CD4-positive, alpha-beta memory T cell (primary cell): ENCODE measurements at regions of chr5 and their contacts with region 1.

Region 1: DNA sequence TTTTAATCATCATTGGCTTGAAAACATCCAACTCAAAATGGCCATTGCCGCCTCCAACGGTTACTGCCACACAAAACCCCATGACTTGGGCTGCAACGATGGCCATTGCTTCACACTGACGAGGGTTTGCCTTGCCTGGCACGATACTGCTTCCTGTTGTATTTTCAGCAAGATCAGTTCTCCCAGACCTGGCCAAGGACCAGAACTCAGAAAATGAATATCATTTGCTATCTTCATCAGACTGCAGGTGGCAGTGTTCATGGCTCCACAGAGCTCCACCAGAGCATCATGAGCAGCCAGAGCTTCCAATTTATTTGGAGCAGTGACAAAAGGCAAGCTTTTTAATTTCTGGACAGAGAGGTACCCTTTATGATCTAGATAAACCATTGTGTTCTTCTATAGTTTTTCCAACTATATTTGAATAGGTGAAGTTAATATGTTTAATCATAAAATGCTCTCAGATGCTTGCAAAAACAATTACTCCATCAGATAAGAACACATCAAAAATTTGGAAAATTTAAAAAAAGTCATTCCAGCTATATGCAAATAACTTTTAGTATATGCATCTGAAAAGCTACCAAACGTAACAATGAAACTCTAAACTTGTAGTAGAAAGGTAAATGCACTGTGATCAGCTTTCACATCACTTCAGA is 10.4 kb downstream of the AMACR start:
- DNase-seq: peak; percentile 28 to 36 (median 33)
- H3K4me3 ChIP-seq: no peak overlapping the region
- H3K4me3 Mint-ChIP-seq: no peak overlapping the region
- H3K27ac ChIP-seq: no peak overlapping the region
- H3K27ac Mint-ChIP-seq: peak overlapping the region in 2 of 7 donors; percentile 19 to 37
- H3K4me1 ChIP-seq: no peaks in the 10 kb centered on the region
- H3K4me1 Mint-ChIP-seq: peaks cover 3 to 7% (median 6%) of the 10 kb centered on the region in 4 donors
- H3K27me3 ChIP-seq: no peaks in the 10 kb centered on the region
- H3K27me3 Mint-ChIP-seq: no peaks in the 10 kb centered on the region

Region 2: DNA sequence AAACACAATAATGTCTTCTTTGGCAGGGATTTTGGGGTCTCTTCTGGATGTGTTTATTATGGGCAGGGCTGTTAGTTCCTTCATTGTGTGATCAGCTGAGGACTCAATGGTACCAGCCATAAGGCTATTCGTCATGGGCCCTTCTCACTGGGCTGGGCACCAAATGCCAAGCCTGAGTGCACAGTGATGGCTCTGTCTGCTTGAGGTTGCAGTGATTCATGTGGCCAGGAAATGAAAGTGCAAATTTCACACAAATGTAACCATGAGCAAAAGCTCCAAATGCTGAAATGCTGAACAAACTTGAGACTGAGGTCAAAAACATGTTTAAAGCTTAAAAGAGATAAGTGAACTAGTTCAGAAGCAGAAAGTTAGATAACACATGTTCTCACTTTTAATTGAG is 365.7 kb before region 1 on chr5:
- CTCF ChIA-PET with region 1: no interaction called
- POLR2A ChIA-PET with region 1: no interaction called
- intact Hi-C with region 1: no loop called
- DNase-seq: no peak
- H3K4me3 ChIP-seq: no peak overlapping the region
- H3K4me3 Mint-ChIP-seq: no peak overlapping the region
- H3K27ac ChIP-seq: no peak overlapping the region
- H3K27ac Mint-ChIP-seq: no peak overlapping the region
- H3K4me1 ChIP-seq: no peaks in the 10 kb centered on the region
- H3K4me1 Mint-ChIP-seq: no peaks in the 10 kb centered on the region
- H3K27me3 ChIP-seq: no peaks in the 10 kb centered on the region
- H3K27me3 Mint-ChIP-seq: peaks cover 0 to 4% of the 10 kb centered on the region in 2 donors

Region 3: DNA sequence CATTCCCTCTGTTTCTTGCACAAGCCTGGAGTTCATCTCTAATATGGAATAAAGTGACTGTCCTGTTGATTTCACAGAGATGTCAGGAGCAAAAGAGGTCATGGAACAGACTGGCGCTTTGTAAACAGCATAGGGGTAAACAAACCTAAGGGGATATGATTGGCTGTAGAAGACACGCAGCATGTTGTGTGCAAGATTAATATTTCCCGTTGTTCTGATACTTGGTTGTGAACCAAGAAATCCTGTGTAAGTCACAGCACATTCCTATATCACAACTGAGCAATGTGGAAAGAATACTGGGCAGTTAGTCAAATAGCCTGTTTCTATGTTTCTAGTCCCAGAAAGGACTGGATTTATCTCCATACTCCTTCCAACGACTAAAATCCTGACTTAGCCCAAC is 108.9 kb before region 1 on chr5:
- CTCF ChIA-PET with region 1: no interaction called
- POLR2A ChIA-PET with region 1: no interaction called
- intact Hi-C with region 1: no loop called
- DNase-seq: no peak
- H3K4me3 ChIP-seq: no peak overlapping the region
- H3K4me3 Mint-ChIP-seq: no peak overlapping the region
- H3K27ac ChIP-seq: no peak overlapping the region
- H3K27ac Mint-ChIP-seq: no peak overlapping the region
- H3K4me1 ChIP-seq: no peaks in the 10 kb centered on the region
- H3K4me1 Mint-ChIP-seq: peaks cover 0 to 11% (median 3%) of the 10 kb centered on the region in 4 donors
- H3K27me3 ChIP-seq: peaks cover 10% of the 10 kb centered on the region
- H3K27me3 Mint-ChIP-seq: peaks cover 21 to 27% of the 10 kb centered on the region in 2 donors

Region 4: DNA sequence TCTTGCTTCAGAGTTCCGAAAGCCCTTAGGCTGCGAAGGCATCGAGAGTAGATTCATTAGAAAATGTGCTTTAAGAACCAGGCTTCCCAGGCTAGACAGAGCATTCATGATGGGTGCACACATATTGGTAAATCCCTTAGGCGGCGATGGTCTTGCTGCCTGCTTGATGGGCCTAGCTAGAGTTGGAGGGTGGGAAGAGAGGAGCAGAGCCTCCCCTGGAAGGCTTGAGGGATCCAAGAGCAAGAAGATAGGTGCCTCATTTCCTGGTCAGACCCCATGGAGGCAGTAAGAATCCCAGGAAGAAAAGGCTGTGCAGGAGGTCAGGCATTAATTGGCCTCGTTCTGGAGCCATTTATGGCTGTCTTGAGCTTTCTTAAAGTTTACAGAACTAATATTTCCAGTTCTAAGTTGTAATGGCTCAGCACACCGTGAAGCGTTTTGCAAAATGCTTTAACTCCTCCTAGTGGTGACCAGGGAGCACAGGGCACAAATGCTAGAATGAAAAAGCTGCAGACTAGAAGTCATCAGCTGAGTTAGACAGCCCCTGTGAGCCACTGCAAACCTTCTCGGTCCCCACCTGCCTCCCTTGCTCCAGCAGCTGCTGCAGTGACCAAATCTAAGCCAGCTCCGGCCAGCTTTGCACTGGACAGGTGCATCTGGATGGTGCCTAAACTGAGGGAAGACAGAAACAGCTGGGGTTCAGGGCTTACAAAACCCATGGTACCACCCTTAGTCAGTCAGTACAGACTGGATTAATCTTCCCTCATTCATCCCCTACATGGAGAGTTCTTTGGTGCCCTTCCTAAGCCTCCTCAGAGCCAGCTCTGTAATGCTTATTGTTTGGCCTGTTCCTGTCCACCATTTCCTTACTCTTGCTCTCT is 27.6 kb before region 1 on chr5:
- CTCF ChIA-PET with region 1: interaction called, 25 read pairs
- POLR2A ChIA-PET with region 1: no interaction called
- intact Hi-C with region 1: no loop called
- DNase-seq: peak in 4 of 5 donors; percentile 8 to 20 (median 12)
- H3K4me3 ChIP-seq: no peak overlapping the region
- H3K4me3 Mint-ChIP-seq: no peak overlapping the region
- H3K27ac ChIP-seq: no peak overlapping the region
- H3K27ac Mint-ChIP-seq: peak overlapping the region in 1 of 7 donors; percentile 35
- H3K4me1 ChIP-seq: no peaks in the 10 kb centered on the region
- H3K4me1 Mint-ChIP-seq: peaks cover 2 to 12% (median 7%) of the 10 kb centered on the region in 4 donors
- H3K27me3 ChIP-seq: no peaks in the 10 kb centered on the region
- H3K27me3 Mint-ChIP-seq: no peaks in the 10 kb centered on the region

Region 5: DNA sequence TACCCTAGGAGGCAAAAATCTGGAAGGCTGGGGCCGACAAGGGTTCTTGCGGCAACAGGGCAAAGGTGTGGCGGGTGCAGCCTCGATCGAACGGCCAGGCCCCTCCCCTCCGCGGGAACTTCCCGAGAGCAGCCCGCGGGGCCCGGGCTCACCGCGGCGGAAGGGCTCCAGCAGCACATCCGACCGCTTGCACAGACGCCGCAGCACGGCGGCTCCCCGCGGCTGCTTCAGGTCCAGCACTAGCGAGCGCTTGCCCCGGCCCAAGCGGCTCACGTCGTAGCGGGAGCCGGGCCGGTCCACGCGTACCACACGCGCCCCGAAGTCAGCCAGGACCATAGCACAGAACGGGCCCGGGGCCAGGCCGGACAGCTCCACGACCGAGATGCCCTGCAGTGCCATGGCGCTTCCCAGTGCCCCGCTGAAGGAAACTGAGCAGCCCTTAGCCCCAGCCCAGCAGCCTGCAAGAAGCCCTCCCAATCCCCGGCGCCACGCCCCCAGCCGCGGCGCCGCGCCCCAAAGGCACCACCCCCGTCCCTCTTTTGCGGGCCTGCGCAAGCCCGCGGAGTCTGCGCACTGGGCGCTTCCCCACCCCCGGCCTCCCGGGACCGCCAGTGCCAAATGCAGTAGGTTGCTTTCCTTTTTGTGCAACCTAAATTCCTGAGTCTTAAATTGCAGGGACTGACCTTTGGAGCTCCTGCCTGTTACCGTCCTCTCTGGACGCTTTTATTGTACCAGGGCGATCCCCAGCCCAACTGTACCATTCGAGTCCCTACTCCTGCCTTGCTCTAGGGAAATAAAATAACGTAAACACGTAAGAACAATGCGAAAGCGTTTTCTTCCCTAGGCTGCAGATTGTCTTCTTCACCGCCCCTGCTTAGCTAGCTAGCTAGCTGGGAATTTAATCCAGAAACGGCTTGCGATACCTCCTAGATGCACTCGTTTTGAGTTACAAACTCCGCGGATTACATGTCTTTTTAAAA is 10.5 kb after region 1 on chr5 and contains the start of gene AMACR:
- CTCF ChIA-PET with region 1: interaction called, 31 read pairs
- POLR2A ChIA-PET with region 1: interaction called, 10 read pairs
- intact Hi-C with region 1: no loop called
- DNase-seq: peak; percentile 75 to 87 (median 86)
- H3K4me3 ChIP-seq: peak within 1 kb of the TSS; percentile 96 to 100
- H3K4me3 Mint-ChIP-seq: peak within 1 kb of the TSS; percentile 93 to 97 (median 96)
- H3K27ac ChIP-seq: peak within 1 kb of the TSS; percentile 76
- H3K27ac Mint-ChIP-seq: peak within 1 kb of the TSS; percentile 84 to 96 (median 94)
- H3K4me1 ChIP-seq: peaks cover 22% of the 10 kb centered on the region
- H3K4me1 Mint-ChIP-seq: peaks cover 11 to 27% (median 19%) of the 10 kb centered on the region in 4 donors
- H3K27me3 ChIP-seq: no peaks in the 10 kb centered on the region
- H3K27me3 Mint-ChIP-seq: no peaks in the 10 kb centered on the region
- total RNA-seq, gene AMACR: 5.2 to 7.3 TPM

Region 6: GRCh38 chr5:34459908-34460307 is 462.5 kb after region 1 on chr5:
- CTCF ChIA-PET with region 1: interaction called, 11 read pairs
- POLR2A ChIA-PET with region 1: no interaction called
- intact Hi-C with region 1: loop called (anchors 1 kb)
- DNase-seq: no peak
- H3K4me3 ChIP-seq: no peak overlapping the region
- H3K4me3 Mint-ChIP-seq: no peak overlapping the region
- H3K27ac ChIP-seq: no peak overlapping the region
- H3K27ac Mint-ChIP-seq: no peak overlapping the region
- H3K4me1 ChIP-seq: no peaks in the 10 kb centered on the region
- H3K4me1 Mint-ChIP-seq: peaks cover 0 to 2% (median under 1%) of the 10 kb centered on the region in 4 donors
- H3K27me3 ChIP-seq: no peaks in the 10 kb centered on the region
- H3K27me3 Mint-ChIP-seq: no peaks in the 10 kb centered on the region